Naive thymus-derived CD4-positive, alpha-beta T cell (primary cell): ENCODE measurements at regions of chr1 and their contacts with region 1.

Region 1: DNA sequence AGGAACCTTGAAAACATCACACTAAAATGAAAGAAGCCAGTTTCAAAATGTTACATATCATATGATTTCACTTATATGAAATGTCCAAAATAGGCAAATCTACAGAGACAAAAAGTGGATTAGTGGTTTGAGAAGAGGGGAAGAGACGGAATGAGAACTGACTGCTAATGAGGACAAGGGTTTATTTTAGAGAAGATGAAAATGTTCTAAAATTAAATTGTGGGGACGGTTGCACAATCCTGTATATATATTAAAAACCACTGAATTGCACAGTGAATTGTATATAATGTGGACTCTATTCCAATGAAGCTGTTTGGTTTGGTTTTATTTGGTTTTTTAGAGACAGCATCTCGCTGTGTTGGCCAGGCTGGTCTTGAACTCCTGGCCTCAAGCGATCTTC is 35.6 kb downstream of the PRPF38A start:
- DNase-seq: no peak
- ATAC-seq: no peak
- H3K4me3 ChIP-seq: no peak overlapping the region
- H3K4me3 Mint-ChIP-seq: no peak overlapping the region
- H3K27ac ChIP-seq: no peak overlapping the region
- H3K27ac Mint-ChIP-seq: peak overlapping the region in 3 of 9 donors; percentile 23 to 78 (median 43)
- H3K4me1 ChIP-seq: no peaks in the 10 kb centered on the region
- H3K4me1 Mint-ChIP-seq: peaks cover 0 to 8% (median 4%) of the 10 kb centered on the region in 7 donors
- H3K27me3 ChIP-seq: no peaks in the 10 kb centered on the region
- H3K27me3 Mint-ChIP-seq: no peaks in the 10 kb centered on the region

Region 2: GRCh38 chr1:52203935-52204625 is 235.9 kb before region 1 on chr1:
- CTCF ChIA-PET with region 1: no interaction called
- POLR2A ChIA-PET with region 1: no interaction called
- intact Hi-C with region 1: no loop called
- DNase-seq: no peak
- ATAC-seq: no peak
- H3K4me3 ChIP-seq: no peak overlapping the region
- H3K4me3 Mint-ChIP-seq: no peak overlapping the region
- H3K27ac ChIP-seq: no peak overlapping the region
- H3K27ac Mint-ChIP-seq: no peak overlapping the region
- H3K4me1 ChIP-seq: no peaks in the 10 kb centered on the region
- H3K4me1 Mint-ChIP-seq: peaks cover 0 to 19% (median 11%) of the 10 kb centered on the region in 7 donors
- H3K27me3 ChIP-seq: no peaks in the 10 kb centered on the region
- H3K27me3 Mint-ChIP-seq: peaks cover 0 to 5% (median 0%) of the 10 kb centered on the region in 5 donors

Region 3: GRCh38 chr1:52393174-52393573 is 46.8 kb before region 1 on chr1:
- CTCF ChIA-PET with region 1: no interaction called
- POLR2A ChIA-PET with region 1: no interaction called
- intact Hi-C with region 1: no loop called
- DNase-seq: no peak
- ATAC-seq: no peak
- H3K4me3 ChIP-seq: no peak overlapping the region
- H3K4me3 Mint-ChIP-seq: no peak overlapping the region
- H3K27ac ChIP-seq: no peak overlapping the region
- H3K27ac Mint-ChIP-seq: no peak overlapping the region
- H3K4me1 ChIP-seq: no peaks in the 10 kb centered on the region
- H3K4me1 Mint-ChIP-seq: peaks cover 0 to 13% (median 0%) of the 10 kb centered on the region in 7 donors
- H3K27me3 ChIP-seq: no peaks in the 10 kb centered on the region
- H3K27me3 Mint-ChIP-seq: no peaks in the 10 kb centered on the region

Region 4: DNA sequence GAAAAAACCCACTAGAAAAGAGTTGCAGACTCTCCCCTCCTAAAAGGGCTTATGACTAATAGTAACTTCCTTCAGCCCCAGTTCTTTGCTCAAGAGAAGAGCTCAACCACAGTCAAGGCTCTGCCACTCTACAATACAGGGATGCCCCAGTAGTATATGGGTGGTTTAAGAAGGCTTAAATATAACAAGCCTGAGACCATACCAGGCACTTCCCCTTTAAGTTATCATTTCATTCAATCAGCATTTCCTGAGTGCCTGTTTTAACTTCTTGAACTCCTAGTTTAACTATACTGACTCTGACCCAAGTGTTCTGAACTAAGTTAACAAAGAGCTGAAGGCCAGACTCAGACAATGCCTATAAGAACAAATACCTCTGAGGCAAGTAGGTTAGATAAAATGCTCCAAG is 15.7 kb before region 1 on chr1:
- CTCF ChIA-PET with region 1: interaction called, 3 read pairs
- POLR2A ChIA-PET with region 1: interaction called, 3 read pairs
- intact Hi-C with region 1: loop called in 1 of 2 experiments (anchors 2 kb)
- DNase-seq: peak in 7 of 9 donors; percentile 38 to 71 (median 57)
- ATAC-seq: peak; percentile 93
- H3K4me3 ChIP-seq: peak overlapping the region; percentile 14
- H3K4me3 Mint-ChIP-seq: peak overlapping the region; percentile 49 to 81 (median 74)
- H3K27ac ChIP-seq: peak overlapping the region; percentile 63
- H3K27ac Mint-ChIP-seq: peak overlapping the region; percentile 85 to 96 (median 91)
- H3K4me1 ChIP-seq: peaks cover 35 to 45% of the 10 kb centered on the region in 2 donors
- H3K4me1 Mint-ChIP-seq: peaks cover 33 to 72% (median 51%) of the 10 kb centered on the region in 7 donors
- H3K27me3 ChIP-seq: no peaks in the 10 kb centered on the region
- H3K27me3 Mint-ChIP-seq: no peaks in the 10 kb centered on the region

Region 5: DNA sequence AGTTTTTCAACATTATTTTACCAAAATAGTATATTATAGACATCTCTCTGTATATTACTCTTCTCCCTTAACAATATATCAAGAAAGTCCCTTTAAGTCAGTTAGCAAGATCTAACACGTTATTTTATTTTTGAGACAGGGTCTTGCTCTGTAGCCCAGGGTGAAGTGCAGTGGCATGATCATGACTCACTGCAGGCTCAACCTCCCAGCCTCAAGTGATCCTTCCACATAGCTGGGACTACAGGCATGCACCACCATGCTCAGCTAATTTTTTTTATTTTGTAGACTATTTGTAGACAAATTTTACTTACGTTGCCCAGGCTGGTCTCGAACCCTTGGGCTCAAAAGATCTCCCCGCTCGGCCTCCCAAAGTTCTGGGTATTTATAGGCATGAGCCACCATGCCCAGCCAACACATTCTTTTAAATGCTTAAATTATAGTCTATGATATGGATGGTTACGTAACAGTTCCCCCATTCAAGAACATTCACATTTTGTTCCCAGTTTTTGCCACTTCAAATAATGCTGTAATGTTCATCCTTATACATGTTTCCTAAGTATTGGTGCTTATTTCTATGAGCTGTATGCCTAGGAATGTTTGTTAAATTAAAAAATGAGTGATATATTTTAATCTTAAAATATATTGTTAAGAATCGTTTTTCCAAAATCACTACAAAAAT is 42.5 kb after region 1 on chr1:
- CTCF ChIA-PET with region 1: no interaction called
- POLR2A ChIA-PET with region 1: no interaction called
- intact Hi-C with region 1: no loop called
- DNase-seq: no peak
- ATAC-seq: no peak
- H3K4me3 ChIP-seq: no peak overlapping the region
- H3K4me3 Mint-ChIP-seq: no peak overlapping the region
- H3K27ac ChIP-seq: no peak overlapping the region
- H3K27ac Mint-ChIP-seq: peak overlapping the region in 1 of 9 donors; percentile 29
- H3K4me1 ChIP-seq: no peaks in the 10 kb centered on the region
- H3K4me1 Mint-ChIP-seq: no peaks in the 10 kb centered on the region
- H3K27me3 ChIP-seq: no peaks in the 10 kb centered on the region
- H3K27me3 Mint-ChIP-seq: no peaks in the 10 kb centered on the region